A673 (cell line): ENCODE measurements at regions of chr1 and their contacts with region 1.

Region 1: DNA sequence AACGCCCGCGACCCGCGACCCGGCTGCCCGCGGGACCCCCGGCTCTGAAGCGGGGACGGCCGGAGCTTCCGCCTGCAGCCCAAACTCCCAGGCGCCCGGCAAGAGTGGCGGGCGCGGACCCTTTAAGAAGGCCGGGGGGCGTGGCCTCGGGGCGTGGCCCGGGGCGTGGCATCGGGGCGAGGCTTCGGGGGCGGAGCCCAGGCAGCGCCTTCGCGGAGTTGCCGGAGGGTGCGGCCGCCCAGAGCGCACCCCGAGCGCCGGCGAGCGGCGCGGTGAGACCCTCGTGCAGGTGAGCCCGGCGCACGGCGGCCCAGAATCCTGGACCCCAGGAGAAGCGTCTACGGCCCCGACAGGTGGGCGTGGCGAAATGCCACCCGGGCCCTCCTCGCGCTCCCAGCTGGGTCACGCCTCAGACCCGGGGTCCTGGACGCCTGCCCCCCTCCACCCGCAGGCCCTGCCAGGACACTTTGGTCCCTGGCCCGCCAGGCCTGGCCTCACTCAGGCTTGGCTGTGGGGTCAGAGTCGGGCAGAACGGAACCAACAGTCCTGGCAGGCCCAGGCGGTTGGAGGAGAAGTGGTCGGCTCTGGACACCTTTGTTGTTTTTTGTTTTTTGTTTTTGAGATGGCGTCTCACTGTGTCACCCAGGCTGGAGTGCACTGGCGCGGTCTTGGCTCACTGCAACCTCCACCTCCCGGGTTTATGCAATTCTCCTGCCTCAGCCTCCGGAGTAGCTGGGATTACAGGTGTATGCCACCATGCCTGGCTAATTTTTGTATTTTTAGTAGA is 14.4 kb downstream of the RNF223 start:
- DNase-seq: peak; percentile 92
- H3K4me3 ChIP-seq: peak overlapping the region; percentile 55
- H3K27ac ChIP-seq: no peak overlapping the region
- H3K4me1 ChIP-seq: peaks cover 30% of the 10 kb centered on the region
- H3K27me3 ChIP-seq: no peaks in the 10 kb centered on the region
- CTCF ChIP-seq: no peak

Region 2: GRCh38 chr1:904310-904950 is 155.3 kb before region 1 on chr1:
- CTCF ChIA-PET with region 1: no interaction called
- POLR2A ChIA-PET with region 1: no interaction called
- intact Hi-C with region 1: no loop called
- DNase-seq: peak; percentile 90
- H3K4me3 ChIP-seq: peak overlapping the region; percentile 54
- H3K27ac ChIP-seq: peak overlapping the region; percentile 77
- H3K4me1 ChIP-seq: peaks cover 20% of the 10 kb centered on the region
- H3K27me3 ChIP-seq: no peaks in the 10 kb centered on the region
- CTCF ChIP-seq: peak; percentile 66

Region 3: DNA sequence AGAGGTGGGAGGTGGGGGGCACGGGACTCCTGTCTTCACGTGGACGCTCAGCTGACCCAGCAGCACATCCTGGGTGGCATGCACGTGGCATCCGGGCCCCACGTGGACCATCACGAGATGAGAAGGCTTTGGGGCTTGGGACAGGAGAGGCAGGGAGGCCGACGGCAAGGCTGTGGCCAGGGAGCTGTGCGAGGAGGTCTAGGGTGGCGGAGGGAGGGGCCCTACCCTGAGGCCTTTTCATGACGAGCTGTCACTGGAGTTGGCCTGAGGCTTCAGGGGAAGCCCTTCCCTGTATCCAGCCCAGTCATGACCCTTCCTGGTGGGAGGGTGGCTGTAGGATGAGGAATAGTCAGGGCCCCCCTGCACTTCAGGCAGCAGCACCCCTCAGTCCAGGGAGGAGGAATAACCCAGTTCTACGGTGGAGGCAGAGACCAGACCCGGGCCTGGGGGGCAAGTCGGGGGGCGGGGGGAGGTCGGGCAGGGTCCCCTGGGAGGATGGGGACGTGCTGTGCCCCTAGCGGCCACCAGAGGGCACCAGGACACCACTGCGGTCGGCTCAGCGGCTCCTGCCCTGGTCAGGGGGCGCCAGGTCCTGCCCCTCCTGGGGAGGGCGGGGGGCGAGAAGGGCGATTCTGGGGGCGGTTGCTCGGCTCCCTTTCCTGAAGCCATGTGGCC is 75.8 kb before region 1 on chr1:
- CTCF ChIA-PET with region 1: no interaction called
- POLR2A ChIA-PET with region 1: no interaction called
- intact Hi-C with region 1: loop called (anchors 5 kb)
- DNase-seq: no peak
- H3K4me3 ChIP-seq: no peak overlapping the region
- H3K27ac ChIP-seq: no peak overlapping the region
- H3K4me1 ChIP-seq: no peaks in the 10 kb centered on the region
- H3K27me3 ChIP-seq: no peaks in the 10 kb centered on the region
- CTCF ChIP-seq: peak; percentile 87

Region 4: GRCh38 chr1:999725-1000356 is 59.8 kb before region 1 on chr1 and contains the start of gene HES4:
- CTCF ChIA-PET with region 1: interaction called, 4 read pairs
- POLR2A ChIA-PET with region 1: no interaction called
- intact Hi-C with region 1: loop called (anchors 5 kb)
- DNase-seq: peak; percentile 95
- H3K4me3 ChIP-seq: peak within 1 kb of the TSS; percentile 70
- H3K27ac ChIP-seq: peak within 1 kb of the TSS; percentile 98
- H3K4me1 ChIP-seq: peaks cover 16% of the 10 kb centered on the region
- H3K27me3 ChIP-seq: no peaks in the 10 kb centered on the region
- CTCF ChIP-seq: no peak
- total RNA-seq, gene HES4: 18.5 and 20.8 TPM in 2 replicates

Region 5: DNA sequence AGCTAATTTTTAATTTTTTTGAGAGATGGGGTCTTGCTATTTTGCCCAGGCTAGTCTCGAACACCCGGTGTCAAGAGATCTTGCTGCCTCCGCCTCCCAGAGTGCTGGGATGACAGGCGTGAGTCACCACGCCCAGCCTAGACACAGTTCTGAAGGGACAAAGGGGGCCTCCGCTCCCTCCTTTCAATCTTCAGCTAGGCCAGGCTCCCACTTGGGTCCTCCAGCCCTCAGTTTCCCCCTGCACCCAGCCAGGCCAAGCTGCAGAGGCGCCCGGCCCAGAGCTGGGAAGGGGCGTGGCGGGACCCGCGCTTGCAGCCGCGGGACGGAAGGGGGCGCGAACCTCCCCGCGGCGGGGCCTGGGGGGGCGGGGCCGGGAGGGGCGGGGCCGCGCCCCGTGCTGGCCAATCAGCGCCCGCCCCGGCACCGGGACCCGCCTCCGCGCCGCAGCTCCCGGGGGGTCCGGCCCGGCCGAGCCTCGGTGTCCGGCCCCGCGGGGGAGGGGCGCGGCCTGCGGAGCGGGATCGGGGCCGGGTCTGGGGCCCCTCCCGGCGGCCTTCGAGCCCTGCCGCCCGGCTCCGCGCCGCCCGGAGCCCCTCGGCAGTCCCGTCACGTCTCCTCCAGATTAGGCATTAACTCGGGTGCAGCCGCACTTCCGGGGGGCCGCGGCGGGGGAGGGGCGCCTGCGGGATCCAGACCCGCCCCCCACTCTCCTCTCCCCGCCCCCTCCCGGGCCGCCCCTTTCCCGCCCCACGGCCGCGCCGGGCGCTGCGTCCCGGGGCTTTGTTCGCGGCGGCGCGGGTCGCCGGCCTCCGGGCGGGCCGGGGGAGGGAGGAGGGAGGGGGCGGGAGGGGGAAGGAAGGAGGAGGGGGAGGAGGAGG is 40.3 kb before region 1 on chr1:
- CTCF ChIA-PET with region 1: interaction called, 10 read pairs
- POLR2A ChIA-PET with region 1: no interaction called
- intact Hi-C with region 1: no loop called
- DNase-seq: peak; percentile 88
- H3K4me3 ChIP-seq: peak overlapping the region; percentile 42
- H3K27ac ChIP-seq: no peak overlapping the region
- H3K4me1 ChIP-seq: peaks cover 44% of the 10 kb centered on the region
- H3K27me3 ChIP-seq: no peaks in the 10 kb centered on the region
- CTCF ChIP-seq: peak; percentile 50

Region 6: DNA sequence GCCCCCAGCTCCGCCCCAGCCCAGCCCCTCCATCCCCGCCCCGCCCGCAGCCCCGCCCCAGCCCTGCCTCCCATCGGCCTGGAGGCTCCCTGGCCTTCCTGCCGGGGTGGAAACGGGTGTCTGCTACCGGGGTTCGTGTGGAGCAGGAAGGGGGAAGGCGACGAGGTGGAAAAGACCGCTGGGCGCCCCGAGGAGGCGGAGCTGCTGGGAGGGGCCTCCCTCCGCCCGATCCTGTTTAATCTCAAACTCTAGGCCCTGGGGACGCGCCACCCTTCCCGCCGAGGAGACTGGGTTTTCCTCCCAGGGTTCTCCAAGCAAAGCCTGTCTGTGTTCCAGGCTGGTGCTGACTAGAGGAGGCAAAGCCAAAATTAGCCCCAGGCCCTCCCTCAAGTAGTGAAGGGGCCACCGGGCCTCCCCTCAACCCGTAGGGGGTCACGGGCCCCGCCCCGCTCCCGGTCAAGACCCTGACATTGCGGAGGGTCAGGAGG is 97.8 kb after region 1 on chr1:
- CTCF ChIA-PET with region 1: no interaction called
- POLR2A ChIA-PET with region 1: no interaction called
- intact Hi-C with region 1: no loop called
- DNase-seq: peak; percentile 94
- H3K4me3 ChIP-seq: peak overlapping the region; percentile 55
- H3K27ac ChIP-seq: peak overlapping the region; percentile 89
- H3K4me1 ChIP-seq: peaks cover 13% of the 10 kb centered on the region
- H3K27me3 ChIP-seq: no peaks in the 10 kb centered on the region
- CTCF ChIP-seq: no peak

Region 7: DNA sequence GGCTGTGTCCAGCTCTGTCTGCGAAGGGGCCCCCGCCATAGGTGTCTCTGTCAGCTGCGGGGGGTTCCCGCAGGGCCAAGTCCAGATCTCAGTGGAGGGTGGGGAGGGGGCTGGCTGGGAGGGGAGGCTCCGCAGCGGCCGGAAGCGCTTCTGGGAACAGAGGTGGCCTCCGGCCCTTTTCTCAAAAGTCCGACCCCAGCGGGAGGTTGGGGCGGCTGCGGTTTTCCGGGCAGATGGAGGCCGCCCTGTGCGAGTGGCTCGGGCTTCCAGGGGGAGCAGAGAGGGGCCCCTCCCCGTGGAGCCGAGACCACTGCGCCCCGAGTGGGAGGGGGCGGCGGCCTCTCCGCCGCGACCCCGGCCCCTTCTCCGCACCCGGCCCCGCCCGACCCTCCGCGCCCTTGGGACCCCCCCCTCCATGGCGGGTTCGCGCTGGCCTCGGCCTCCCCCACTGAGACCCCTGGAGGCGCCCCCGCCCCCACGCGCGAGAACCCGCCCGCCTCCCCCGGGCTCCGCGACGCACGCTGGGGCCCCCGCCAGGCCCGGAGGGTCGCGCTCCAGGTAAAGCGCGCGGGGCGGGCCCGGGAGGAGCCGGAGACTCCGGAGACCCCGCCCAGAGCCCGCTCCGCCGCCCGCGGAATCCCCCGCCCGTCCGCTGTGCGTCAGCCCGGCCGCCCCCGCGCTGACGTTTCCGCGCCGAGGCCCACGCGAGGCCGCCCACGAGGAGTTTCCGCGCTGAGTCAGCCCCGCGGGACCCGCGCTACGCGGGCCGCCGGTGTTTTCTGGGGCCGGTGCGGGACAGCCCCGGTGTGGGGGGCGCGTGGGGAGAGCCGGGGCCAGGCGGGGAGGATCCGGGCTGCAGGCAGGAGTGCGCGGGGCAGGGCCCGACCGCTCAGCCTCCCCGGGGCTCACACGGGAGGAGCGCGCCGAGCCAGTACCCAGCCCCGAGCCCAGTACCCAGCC is 141.4 kb after region 1 on chr1:
- CTCF ChIA-PET with region 1: no interaction called
- POLR2A ChIA-PET with region 1: no interaction called
- intact Hi-C with region 1: no loop called
- DNase-seq: peak; percentile 57
- H3K4me3 ChIP-seq: peak overlapping the region; percentile 48
- H3K27ac ChIP-seq: peak overlapping the region; percentile 32
- H3K4me1 ChIP-seq: no peaks in the 10 kb centered on the region
- H3K27me3 ChIP-seq: no peaks in the 10 kb centered on the region
- CTCF ChIP-seq: no peak